Calu3 (cell line): ENCODE measurements at regions of chr7 and their contacts with region 1.

Region 1: DNA sequence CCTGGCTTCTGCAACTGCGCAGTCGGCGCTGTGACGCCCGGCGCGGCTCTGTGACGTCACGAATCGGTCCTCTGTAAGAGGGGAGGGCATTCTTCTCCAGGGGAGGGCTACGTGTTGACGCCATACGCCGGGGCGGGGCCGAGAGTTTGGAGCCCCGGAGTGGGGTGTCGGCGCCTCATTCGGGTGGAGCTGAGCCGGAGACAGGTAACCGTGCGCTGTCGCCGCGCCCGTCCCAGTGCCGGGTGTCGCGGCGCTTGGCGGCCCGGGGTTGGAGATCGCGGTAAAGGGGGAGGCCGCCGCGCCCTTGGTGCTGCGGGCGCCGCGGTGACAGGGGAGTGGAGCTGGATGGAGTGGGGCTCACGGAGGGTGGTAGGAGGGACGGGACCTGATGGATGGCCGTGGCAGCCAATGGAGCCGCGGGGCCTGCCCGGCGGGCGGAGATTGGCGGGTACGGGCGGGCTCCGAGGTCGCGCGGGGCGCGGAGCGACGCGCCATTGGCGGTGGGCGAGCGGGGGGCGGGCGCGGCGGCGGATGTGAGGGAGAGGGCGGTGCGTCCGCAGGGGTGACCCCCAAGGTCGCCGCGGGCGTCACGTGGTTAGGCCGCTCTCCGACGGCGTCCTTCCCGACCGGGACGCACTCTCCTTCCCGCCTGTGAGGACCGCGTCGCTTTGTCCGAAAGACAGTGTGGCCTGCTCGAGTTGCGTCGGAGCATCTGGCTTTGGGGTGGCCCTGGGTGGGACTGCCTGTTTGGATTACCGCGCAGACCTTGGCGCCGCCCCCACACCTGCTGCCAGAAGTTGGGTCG is at the start of gene OGDH:
- DNase-seq: peak; percentile 100
- H3K4me3 Mint-ChIP-seq: peak within 1 kb of the TSS; percentile 95
- H3K27ac Mint-ChIP-seq: peak within 1 kb of the TSS; percentile 95
- H3K4me1 Mint-ChIP-seq: peaks cover 17% of the 10 kb centered on the region
- H3K27me3 Mint-ChIP-seq: no peaks in the 10 kb centered on the region
- CTCF ChIP-seq: no peak
- total RNA-seq, gene OGDH: 100 and 105 TPM in 2 replicates

Region 2: DNA sequence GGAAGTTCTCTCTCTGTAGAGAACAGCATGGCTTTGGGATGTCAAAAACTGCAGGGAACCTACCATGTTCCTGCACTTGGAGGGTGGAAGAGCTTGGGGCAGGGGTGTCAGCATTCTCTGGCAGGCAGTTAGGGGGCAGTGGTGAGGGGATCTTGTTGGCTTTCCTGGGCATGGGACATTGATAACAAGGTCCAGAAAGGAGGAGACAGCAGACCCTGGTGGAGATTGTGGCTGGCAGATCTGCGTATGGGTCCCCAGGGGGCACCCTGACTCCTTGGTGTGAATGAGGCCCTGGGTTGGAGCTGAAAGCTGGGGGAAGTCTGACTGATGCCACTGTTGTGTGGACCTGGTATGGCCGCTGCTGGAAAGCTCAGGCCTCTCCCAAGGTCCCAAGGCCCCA is 258.4 kb before region 1 on chr7:
- CTCF ChIA-PET with region 1: no interaction called
- intact Hi-C with region 1: no loop called
- DNase-seq: peak; percentile 46
- H3K4me3 Mint-ChIP-seq: no peak overlapping the region
- H3K27ac Mint-ChIP-seq: no peak overlapping the region
- H3K4me1 Mint-ChIP-seq: no peaks in the 10 kb centered on the region
- H3K27me3 Mint-ChIP-seq: peaks cover 39% of the 10 kb centered on the region
- CTCF ChIP-seq: peak; percentile 69

Region 3: DNA sequence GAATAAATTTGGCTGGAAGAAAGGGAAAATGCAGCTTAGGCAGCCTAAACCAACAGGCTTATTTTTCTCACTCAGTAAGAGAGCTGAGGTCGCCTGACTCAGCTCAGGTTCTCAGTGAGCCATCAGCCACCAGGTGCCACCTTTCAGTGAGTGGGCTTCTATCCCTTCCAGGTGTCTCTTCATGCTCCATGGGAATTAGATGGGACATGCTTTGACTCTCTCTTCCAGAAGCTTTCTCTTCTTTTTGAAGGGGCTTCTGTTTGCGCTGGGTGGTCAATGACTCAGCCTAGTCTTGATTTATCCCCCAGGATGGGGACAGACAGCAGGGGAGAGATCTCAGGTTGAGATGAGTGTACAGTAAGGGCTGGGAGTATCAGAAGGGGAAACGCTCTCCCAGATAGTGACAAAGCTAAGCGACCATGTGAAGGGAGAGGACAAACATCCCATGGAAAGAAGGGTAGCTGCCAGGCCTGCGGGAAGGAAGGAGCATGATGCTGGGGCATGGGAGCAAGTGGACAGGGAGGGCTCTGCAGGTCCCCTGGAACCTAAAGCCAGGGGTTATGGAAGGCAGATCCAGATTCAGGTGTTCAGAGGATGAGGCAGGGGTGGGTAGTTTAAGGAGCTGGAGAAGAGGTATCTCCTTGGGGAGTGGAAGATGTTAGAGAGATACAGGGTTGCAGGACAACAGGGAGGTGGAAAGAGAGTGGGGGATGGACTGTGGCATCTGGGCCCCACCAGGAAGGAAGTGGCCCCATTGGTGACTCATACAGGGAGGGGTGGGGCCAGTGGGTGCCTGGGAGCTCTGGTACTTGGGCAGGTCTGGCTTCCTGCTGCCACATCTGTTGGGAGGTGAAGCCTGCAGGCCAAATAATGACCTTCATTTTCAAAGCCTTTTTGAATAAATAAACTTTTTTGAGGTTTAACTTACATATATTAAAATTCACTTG is 32.2 kb after region 1 on chr7:
- CTCF ChIA-PET with region 1: interaction called, 23 read pairs
- intact Hi-C with region 1: loop called (anchors 2 kb)
- DNase-seq: peak; percentile 97
- H3K4me3 Mint-ChIP-seq: peak overlapping the region; percentile 33
- H3K27ac Mint-ChIP-seq: peak overlapping the region; percentile 94
- H3K4me1 Mint-ChIP-seq: peaks cover 67% of the 10 kb centered on the region
- H3K27me3 Mint-ChIP-seq: no peaks in the 10 kb centered on the region
- CTCF ChIP-seq: no peak

Region 4: GRCh38 chr7:44791278-44792219 is 184.9 kb after region 1 on chr7:
- CTCF ChIA-PET with region 1: no interaction called
- intact Hi-C with region 1: no loop called
- DNase-seq: no peak
- H3K4me3 Mint-ChIP-seq: no peak overlapping the region
- H3K27ac Mint-ChIP-seq: no peak overlapping the region
- H3K4me1 Mint-ChIP-seq: no peaks in the 10 kb centered on the region
- H3K27me3 Mint-ChIP-seq: no peaks in the 10 kb centered on the region
- CTCF ChIP-seq: no peak